B cell (primary cell): ENCODE measurements at regions of chr1 and their contacts with region 1.

Region 1: GRCh38 chr1:89085781-89086180 is 20.8 kb upstream of the GBP1 start:
- DNase-seq: peak; percentile 38
- ATAC-seq: peak; percentile 47
- H3K4me3 ChIP-seq: no peak overlapping the region
- H3K4me3 Mint-ChIP-seq: no peak overlapping the region
- H3K27ac ChIP-seq: no peak overlapping the region
- H3K27ac Mint-ChIP-seq: no peak overlapping the region
- H3K4me1 ChIP-seq: peaks cover 7 to 9% of the 10 kb centered on the region in 2 donors
- H3K4me1 Mint-ChIP-seq: peaks cover 4% of the 10 kb centered on the region
- H3K27me3 ChIP-seq: no peaks in the 10 kb centered on the region
- H3K27me3 Mint-ChIP-seq: no peaks in the 10 kb centered on the region
- CTCF ChIP-seq: peak; percentile 82

Region 2: DNA sequence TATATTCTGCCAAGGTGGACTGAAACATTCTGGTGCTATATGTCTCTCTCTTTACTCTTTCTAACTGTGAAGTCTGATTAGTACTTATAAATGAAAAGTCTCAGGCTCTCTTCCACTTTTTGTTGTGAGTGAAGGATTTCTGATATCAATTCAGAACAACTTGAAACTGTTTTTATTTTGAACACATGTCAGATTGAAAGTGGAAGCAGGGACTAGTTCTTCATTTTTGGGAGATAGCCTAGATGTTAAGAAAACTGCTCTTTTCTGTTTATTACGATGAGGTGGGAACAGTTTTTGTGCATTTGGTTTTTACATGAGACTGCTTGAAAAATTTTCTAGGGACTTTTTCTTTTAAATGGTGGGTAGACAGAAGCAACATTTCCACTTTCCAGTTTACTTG is 48.6 kb before region 1 on chr1:
- CTCF ChIA-PET with region 1: no interaction called
- POLR2A ChIA-PET with region 1: no interaction called
- intact Hi-C with region 1: no loop called
- DNase-seq: peak; percentile 8
- ATAC-seq: no peak
- H3K4me3 ChIP-seq: peak overlapping the region in 1 of 5 experiments; percentile 5
- H3K4me3 Mint-ChIP-seq: peak overlapping the region; percentile 61
- H3K27ac ChIP-seq: no peak overlapping the region
- H3K27ac Mint-ChIP-seq: no peak overlapping the region
- H3K4me1 ChIP-seq: peaks cover 0 to 10% of the 10 kb centered on the region in 2 donors
- H3K4me1 Mint-ChIP-seq: peaks cover 14% of the 10 kb centered on the region
- H3K27me3 ChIP-seq: no peaks in the 10 kb centered on the region
- H3K27me3 Mint-ChIP-seq: no peaks in the 10 kb centered on the region
- CTCF ChIP-seq: no peak

Region 3: GRCh38 chr1:89171067-89171438 is 85.3 kb after region 1 on chr1:
- CTCF ChIA-PET with region 1: no interaction called
- POLR2A ChIA-PET with region 1: no interaction called
- intact Hi-C with region 1: no loop called
- DNase-seq: no peak
- ATAC-seq: no peak
- H3K4me3 ChIP-seq: no peak overlapping the region
- H3K4me3 Mint-ChIP-seq: no peak overlapping the region
- H3K27ac ChIP-seq: no peak overlapping the region
- H3K27ac Mint-ChIP-seq: no peak overlapping the region
- H3K4me1 ChIP-seq: no peaks in the 10 kb centered on the region
- H3K4me1 Mint-ChIP-seq: peaks cover 9% of the 10 kb centered on the region
- H3K27me3 ChIP-seq: no peaks in the 10 kb centered on the region
- H3K27me3 Mint-ChIP-seq: no peaks in the 10 kb centered on the region
- CTCF ChIP-seq: no peak

Region 4: GRCh38 chr1:89298461-89298860 is 212.7 kb after region 1 on chr1:
- CTCF ChIA-PET with region 1: no interaction called
- POLR2A ChIA-PET with region 1: no interaction called
- intact Hi-C with region 1: no loop called
- DNase-seq: no peak
- ATAC-seq: no peak
- H3K4me3 ChIP-seq: no peak overlapping the region
- H3K4me3 Mint-ChIP-seq: no peak overlapping the region
- H3K27ac ChIP-seq: no peak overlapping the region
- H3K27ac Mint-ChIP-seq: no peak overlapping the region
- H3K4me1 ChIP-seq: no peaks in the 10 kb centered on the region
- H3K4me1 Mint-ChIP-seq: peaks cover 4% of the 10 kb centered on the region
- H3K27me3 ChIP-seq: no peaks in the 10 kb centered on the region
- H3K27me3 Mint-ChIP-seq: no peaks in the 10 kb centered on the region
- CTCF ChIP-seq: no peak

Region 5: GRCh38 chr1:89358287-89358893 is 272.6 kb after region 1 on chr1:
- CTCF ChIA-PET with region 1: interaction called, 117 read pairs
- POLR2A ChIA-PET with region 1: no interaction called
- intact Hi-C with region 1: loop called (anchors 1 kb)
- DNase-seq: peak; percentile 83
- ATAC-seq: peak; percentile 92
- H3K4me3 ChIP-seq: no peak overlapping the region
- H3K4me3 Mint-ChIP-seq: no peak overlapping the region
- H3K27ac ChIP-seq: no peak overlapping the region
- H3K27ac Mint-ChIP-seq: no peak overlapping the region
- H3K4me1 ChIP-seq: no peaks in the 10 kb centered on the region
- H3K4me1 Mint-ChIP-seq: peaks cover 2% of the 10 kb centered on the region
- H3K27me3 ChIP-seq: no peaks in the 10 kb centered on the region
- H3K27me3 Mint-ChIP-seq: peaks cover 3% of the 10 kb centered on the region
- CTCF ChIP-seq: peak; percentile 92